HCT116 (cell line): ENCODE measurements at regions of chr15 and their contacts with region 1.

Region 1: DNA sequence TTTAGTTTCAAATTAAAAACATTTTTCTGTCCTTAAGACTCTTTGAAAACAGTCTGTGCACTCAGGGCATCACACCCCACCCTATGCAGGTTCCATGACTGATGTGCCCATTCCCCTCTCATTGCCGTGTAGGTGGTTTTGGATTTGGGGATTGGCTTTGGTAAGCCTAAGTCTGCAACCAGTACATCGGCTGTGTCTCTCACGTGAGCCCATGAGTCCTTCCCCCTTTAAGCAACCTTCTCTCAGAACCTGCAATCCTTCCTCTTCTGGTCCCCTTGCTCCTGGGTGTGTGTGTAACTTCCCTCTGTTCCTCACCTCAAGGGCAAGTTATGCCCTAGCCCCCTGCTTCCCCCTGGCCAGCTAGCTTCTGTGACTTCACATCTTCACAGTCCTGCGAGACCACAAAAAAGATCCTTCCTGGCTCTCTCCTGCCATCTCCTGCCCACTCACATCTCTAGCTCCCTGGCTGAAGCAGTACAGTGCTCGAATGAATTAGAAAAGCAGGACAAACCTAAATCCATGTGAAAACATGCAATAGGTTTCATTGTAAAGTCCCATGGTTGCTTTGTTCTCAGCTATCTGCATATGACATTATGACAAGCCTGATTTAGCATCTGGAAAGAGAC is 126.7 kb downstream of the UACA start:
- DNase-seq: peak; percentile 16
- ATAC-seq: no peak; the same call in 1 of the 2 replicates
- H3K4me3 ChIP-seq: no peak overlapping the region
- H3K27ac ChIP-seq: no peak overlapping the region
- H3K4me1 ChIP-seq: no peaks in the 10 kb centered on the region; a peak in 1 of 4 replicates
- H3K27me3 ChIP-seq: 0 out of 2 replicates have a peak, but pooled peaks cover 6% of the 10 kb centered on the region
- CTCF ChIP-seq: peak; percentile 31 to 45 (median 44); a peak in 4 of 6 replicates
- POLR2A ChIP-seq: no peak
- RAD21 ChIP-seq: peak; percentile 67

Region 2: GRCh38 chr15:70569091-70569621 is 67.5 kb before region 1 on chr15:
- CTCF ChIA-PET with region 1: interaction called, 16 read pairs
- POLR2A ChIA-PET with region 1: no interaction called
- RAD21 ChIA-PET with region 1: interaction called in 1 of 2 experiments, 6 read pairs
- intact Hi-C with region 1: no loop called
- DNase-seq: peak; percentile 73
- ATAC-seq: peak; percentile 89
- H3K4me3 ChIP-seq: peak overlapping the region; percentile 6 to 17; a peak in 3 of 4 replicates
- H3K27ac ChIP-seq: peak overlapping the region; percentile 56
- H3K4me1 ChIP-seq: peaks cover 20 to 25% of the 10 kb centered on the region in 2 experiments
- H3K27me3 ChIP-seq: no peaks in the 10 kb centered on the region
- CTCF ChIP-seq: peak; percentile 79 to 93 (median 87)
- POLR2A ChIP-seq: no peak
- RAD21 ChIP-seq: peak; percentile 93